CD14-positive monocyte (primary cell): ENCODE measurements at regions of chr20 and their contacts with region 1.

Region 1: GRCh38 chr20:48620519-48621254 is 207.1 kb downstream of the PREX1 start:
- DNase-seq: peak; percentile 50 to 68 (median 65)
- H3K4me3 ChIP-seq: peak overlapping the region in 1 of 3 experiments; percentile 38
- H3K4me3 Mint-ChIP-seq: peak overlapping the region; percentile 14 to 73
- H3K27ac ChIP-seq: peak overlapping the region in 1 of 2 donors; percentile 32
- H3K27ac Mint-ChIP-seq: peak overlapping the region in 6 of 7 donors; percentile 11 to 83 (median 64)
- H3K4me1 ChIP-seq: peaks cover 14 to 15% of the 10 kb centered on the region in 2 donors
- H3K4me1 Mint-ChIP-seq: peaks cover 21% of the 10 kb centered on the region
- H3K27me3 ChIP-seq: no peaks in the 10 kb centered on the region
- H3K27me3 Mint-ChIP-seq: peaks cover 6 to 15% (median 8%) of the 10 kb centered on the region in 3 donors
- CTCF ChIP-seq: peak; percentile 99

Region 2: GRCh38 chr20:47663333-47664067 is 957.2 kb before region 1 on chr20:
- intact Hi-C with region 1: loop called (anchors 1 to 5 kb)
- DNase-seq: peak; percentile 59 to 72 (median 67)
- H3K4me3 ChIP-seq: no peak overlapping the region
- H3K4me3 Mint-ChIP-seq: no peak overlapping the region
- H3K27ac ChIP-seq: peak overlapping the region in 1 of 2 donors; percentile 48
- H3K27ac Mint-ChIP-seq: peak overlapping the region in 2 of 7 donors; percentile 37 to 66
- H3K4me1 ChIP-seq: no peaks in the 10 kb centered on the region
- H3K4me1 Mint-ChIP-seq: peaks cover 2% of the 10 kb centered on the region
- H3K27me3 ChIP-seq: no peaks in the 10 kb centered on the region
- H3K27me3 Mint-ChIP-seq: peaks cover 0 to 3% (median 3%) of the 10 kb centered on the region in 3 donors
- CTCF ChIP-seq: peak; percentile 99

Region 3: GRCh38 chr20:47785854-47786764 is 834.6 kb before region 1 on chr20:
- intact Hi-C with region 1: loop called (anchors 2 to 10 kb)
- DNase-seq: peak; percentile 60 to 70 (median 63)
- H3K4me3 ChIP-seq: peak overlapping the region; percentile 49 to 85 (median 51)
- H3K4me3 Mint-ChIP-seq: peak overlapping the region; percentile 95 to 99
- H3K27ac ChIP-seq: peak overlapping the region; percentile 57 to 84
- H3K27ac Mint-ChIP-seq: peak overlapping the region; percentile 91 to 97 (median 95)
- H3K4me1 ChIP-seq: peaks cover 41 to 47% of the 10 kb centered on the region in 2 donors
- H3K4me1 Mint-ChIP-seq: peaks cover 45% of the 10 kb centered on the region
- H3K27me3 ChIP-seq: peaks cover 0 to 11% of the 10 kb centered on the region in 2 donors
- H3K27me3 Mint-ChIP-seq: peaks cover 14 to 25% (median 23%) of the 10 kb centered on the region in 3 donors
- CTCF ChIP-seq: peak; percentile 57